ENCODE measurements at regions of chr5 and their contacts with region 1.

Region 1: DNA sequence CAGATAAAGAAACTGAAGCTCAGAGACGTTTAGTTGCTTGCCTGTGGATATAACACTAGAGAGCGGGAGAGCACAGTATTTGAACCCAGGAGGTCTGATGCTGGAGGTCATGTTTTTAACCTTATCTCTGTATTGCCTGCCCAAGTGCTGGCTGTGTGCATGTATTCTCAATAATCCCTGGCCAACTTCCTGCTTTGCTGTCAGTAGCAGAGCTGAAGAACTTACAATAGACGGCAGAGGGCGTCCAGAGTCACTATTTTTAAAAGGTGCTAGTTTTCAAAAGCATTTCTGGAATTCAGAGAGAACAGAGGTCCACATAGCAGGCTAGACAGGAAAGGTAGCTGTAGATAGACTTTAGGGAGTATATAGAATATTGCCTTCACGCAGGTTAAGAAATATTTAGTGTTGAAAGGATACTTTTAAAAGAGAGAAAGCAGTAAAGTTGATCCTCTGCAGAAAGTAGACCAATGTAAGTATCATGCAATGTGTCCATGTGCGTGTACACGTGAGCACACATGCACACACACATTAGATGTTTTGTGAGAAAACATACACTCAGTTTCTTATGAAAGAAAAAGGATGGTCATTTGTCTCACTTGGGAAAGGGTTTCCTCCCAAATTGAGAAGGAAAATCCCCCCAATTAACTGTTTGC is 46.3 kb downstream of the PTCD2 start:
- DNase-seq: peak; percentile 16 to 84
- ATAC-seq: peak; percentile 85 to 96 (median 90)
- H3K4me3 ChIP-seq: no peak overlapping the region
- H3K27ac ChIP-seq: peak overlapping the region in 5 of 10 donors; percentile 2 to 68 (median 49)
- H3K4me1 ChIP-seq: peaks cover 0 to 47% (median 11%) of the 10 kb centered on the region in 9 donors
- H3K27me3 ChIP-seq: no peaks in the 10 kb centered on the region
- CTCF ChIP-seq: peak; percentile 63 to 92 (median 80)

Region 2: DNA sequence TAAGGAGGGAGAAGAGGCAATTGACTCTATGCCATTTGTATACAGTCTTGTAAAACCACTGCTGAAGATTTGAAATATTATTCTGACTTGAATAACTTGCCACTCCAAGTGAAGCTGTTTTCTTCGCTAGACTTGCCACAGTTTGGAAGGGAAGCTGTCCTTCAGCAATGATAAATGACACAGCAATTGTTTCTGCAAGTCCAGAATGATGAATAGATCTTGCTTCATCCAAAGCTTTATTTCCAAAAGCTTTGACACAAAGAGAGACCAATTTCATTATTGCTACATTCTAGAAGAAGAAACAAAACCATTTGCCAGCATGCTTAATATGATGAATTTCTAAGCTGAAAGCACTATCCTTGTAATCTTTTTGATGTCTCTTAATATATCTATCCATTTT is 67.1 kb after region 1 on chr5:
- intact Hi-C with region 1: loop called in 1 of 10 experiments (anchors 5 kb)
- DNase-seq: no peak
- ATAC-seq: no peak
- H3K4me3 ChIP-seq: no peak overlapping the region
- H3K27ac ChIP-seq: peak overlapping the region in 7 of 10 donors; percentile 24 to 83 (median 67)
- H3K4me1 ChIP-seq: peaks cover 0 to 45% (median 31%) of the 10 kb centered on the region in 9 donors
- H3K27me3 ChIP-seq: no peaks in the 10 kb centered on the region
- CTCF ChIP-seq: no peak

Region 3: DNA sequence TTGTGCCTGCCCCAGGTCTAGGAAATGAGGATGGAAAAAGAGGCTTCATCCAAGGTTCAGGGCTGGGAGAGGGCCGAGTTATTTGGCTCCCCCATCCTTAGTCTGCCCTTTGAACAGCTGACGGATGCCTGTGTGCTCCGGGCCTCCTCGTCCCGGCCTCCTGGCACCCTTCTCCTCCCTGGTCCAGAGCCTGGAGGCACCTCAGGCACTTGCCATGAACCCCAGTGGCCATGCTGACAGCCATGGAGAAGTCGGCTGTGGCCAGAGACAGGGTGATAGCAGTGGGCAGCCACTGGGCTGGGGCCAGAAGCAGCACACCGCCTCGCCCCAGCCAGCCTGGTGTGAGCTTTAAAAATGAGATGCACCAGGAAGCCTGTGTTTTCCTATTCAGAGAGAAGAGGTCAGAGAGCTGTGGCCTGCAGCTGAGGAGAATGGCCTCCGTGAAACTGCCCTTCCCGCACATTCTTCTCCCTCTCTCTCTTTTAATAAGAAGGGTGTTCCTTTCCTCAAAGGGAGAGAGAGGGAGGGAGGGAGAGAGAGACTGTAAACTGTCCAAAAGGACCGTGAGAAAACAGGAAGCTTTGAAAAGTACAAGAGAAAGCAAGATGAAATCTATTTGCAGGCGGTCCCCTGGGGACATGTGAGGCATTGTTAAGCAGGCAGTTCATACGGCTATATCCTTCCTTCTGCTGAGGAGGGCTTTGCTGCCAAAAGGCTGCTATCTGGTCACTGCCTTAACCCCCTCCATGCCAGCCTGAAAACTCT is 85.5 kb after region 1 on chr5:
- intact Hi-C with region 1: loop called in 3 of 10 experiments (anchors 2 to 10 kb)
- DNase-seq: peak; percentile 57 to 89
- ATAC-seq: peak; percentile 78 to 89 (median 84)
- H3K4me3 ChIP-seq: peak overlapping the region in 1 of 10 donors; percentile 9
- H3K27ac ChIP-seq: peak overlapping the region; percentile 88 to 99 (median 93)
- H3K4me1 ChIP-seq: peaks cover 30 to 77% (median 70%) of the 10 kb centered on the region in 9 donors
- H3K27me3 ChIP-seq: no peaks in the 10 kb centered on the region
- CTCF ChIP-seq: no peak

Region 4: GRCh38 chr5:72459089-72459661 is 92.7 kb after region 1 on chr5:
- intact Hi-C with region 1: loop called in 1 of 10 experiments (anchors 5 kb)
- DNase-seq: no peak
- ATAC-seq: no peak
- H3K4me3 ChIP-seq: no peak overlapping the region
- H3K27ac ChIP-seq: peak overlapping the region in 2 of 10 donors; percentile 1 to 60
- H3K4me1 ChIP-seq: peaks cover 9 to 73% (median 52%) of the 10 kb centered on the region in 9 donors
- H3K27me3 ChIP-seq: no peaks in the 10 kb centered on the region
- CTCF ChIP-seq: no peak

Region 5: GRCh38 chr5:72510610-72511181 is 144.2 kb after region 1 on chr5:
- intact Hi-C with region 1: loop called in 3 of 10 experiments (anchors 5 kb)
- DNase-seq: peak in 1 of 2 donors; percentile 23
- ATAC-seq: peak in 4 of 8 donors; percentile 27 to 75 (median 66)
- H3K4me3 ChIP-seq: no peak overlapping the region
- H3K27ac ChIP-seq: peak overlapping the region in 8 of 10 donors; percentile 15 to 92 (median 80)
- H3K4me1 ChIP-seq: peaks cover 10 to 61% (median 40%) of the 10 kb centered on the region in 9 donors
- H3K27me3 ChIP-seq: no peaks in the 10 kb centered on the region
- CTCF ChIP-seq: no peak

Region 6: DNA sequence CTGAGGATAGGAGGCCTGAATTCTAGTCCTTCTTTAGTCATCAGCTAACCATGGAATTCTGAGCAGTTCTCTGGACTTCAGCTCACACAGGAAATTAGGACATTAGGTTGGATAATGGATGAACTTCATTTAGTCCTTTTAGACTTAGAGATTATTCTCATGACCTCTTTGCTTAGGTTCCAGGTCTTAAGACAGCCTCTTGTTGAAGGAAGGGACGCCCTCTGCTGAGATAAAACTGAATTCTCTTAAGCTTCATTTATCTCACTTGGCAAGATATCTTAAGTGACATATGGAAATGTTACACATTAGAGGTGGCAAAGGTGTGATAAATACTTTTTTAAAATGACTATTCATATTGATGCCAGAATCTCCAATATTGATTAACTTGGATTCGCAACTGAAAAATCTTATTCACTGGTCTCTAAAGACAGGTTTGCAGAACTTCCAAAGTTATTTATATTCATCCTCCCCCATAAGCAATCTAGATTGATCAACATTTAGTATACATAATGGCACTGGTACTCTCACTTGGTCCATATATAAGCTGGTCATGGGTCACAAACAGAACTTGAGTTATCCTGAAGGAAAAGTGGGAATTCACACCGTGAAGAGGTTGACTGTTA is 157.6 kb after region 1 on chr5:
- intact Hi-C with region 1: loop called (anchors 1 to 5 kb)
- DNase-seq: no peak
- ATAC-seq: peak; percentile 44 to 91 (median 81)
- H3K4me3 ChIP-seq: no peak overlapping the region
- H3K27ac ChIP-seq: peak overlapping the region in 4 of 10 donors; percentile 1 to 59 (median 20)
- H3K4me1 ChIP-seq: peaks cover 0 to 19% (median 7%) of the 10 kb centered on the region in 9 donors
- H3K27me3 ChIP-seq: no peaks in the 10 kb centered on the region
- CTCF ChIP-seq: peak; percentile 59 to 86 (median 68)

Region 7: GRCh38 chr5:72822944-72823343 is 456.5 kb after region 1 on chr5:
- intact Hi-C with region 1: loop called in 6 of 10 experiments (anchors 5 to 10 kb)
- DNase-seq: no peak
- ATAC-seq: no peak
- H3K4me3 ChIP-seq: no peak overlapping the region
- H3K27ac ChIP-seq: no peak overlapping the region
- H3K4me1 ChIP-seq: peaks cover 0 to 44% (median 33%) of the 10 kb centered on the region in 9 donors
- H3K27me3 ChIP-seq: no peaks in the 10 kb centered on the region
- CTCF ChIP-seq: no peak

Measured in heart right ventricle (tissue), 16 donors.